ENCODE measurements at regions of chr2 and their contacts with region 1.

Region 1: DNA sequence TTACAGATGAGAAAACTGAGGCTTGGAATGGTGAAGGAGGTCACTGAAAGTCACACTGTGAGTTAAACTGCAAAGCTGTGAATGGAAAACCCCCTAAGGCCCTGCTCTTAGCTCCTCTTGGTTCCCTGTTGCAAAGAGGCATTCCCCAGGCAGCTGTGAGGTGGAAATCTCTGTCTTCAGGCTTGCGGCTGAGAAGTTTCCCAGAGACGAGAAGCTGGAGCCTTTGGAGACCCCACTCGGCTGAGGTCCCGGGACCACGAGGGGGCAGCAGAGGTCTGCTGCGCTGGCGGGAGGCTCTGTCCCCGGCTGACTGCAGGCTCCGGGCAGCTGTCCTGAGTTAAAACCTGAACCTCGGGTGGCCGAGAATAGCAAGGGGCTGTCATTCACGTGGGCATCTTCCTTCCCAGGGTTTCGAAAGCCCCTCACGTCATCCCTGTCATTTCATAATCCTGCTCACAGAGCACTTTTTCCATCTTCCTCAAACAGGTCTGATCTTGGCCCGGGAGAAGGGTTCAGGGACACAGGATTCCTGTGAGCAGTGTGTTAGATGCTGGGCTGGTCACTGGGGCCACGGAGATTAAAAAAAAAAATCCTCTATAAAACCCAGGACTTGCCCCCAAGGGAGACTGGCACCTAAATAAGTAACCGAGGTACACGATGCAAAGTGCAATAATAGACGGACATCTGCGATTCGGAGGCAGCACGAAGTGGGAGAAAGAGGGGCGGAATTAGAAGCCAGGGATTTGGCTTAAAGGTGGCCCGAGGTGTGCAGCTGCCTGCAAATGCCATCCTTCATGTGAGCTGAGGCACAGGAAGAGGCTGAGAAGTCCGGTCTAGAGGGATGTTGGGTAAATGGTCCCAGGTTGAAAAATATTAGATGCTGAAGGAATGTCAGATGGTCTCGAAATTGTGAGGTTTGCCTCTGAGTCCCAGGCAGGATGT is 24.6 kb upstream of the ATOH8 start:
- DNase-seq: peak; percentile 90
- H3K4me3 ChIP-seq: peak overlapping the region in 1 of 2 experiments; percentile 47; a peak in 1 of 4 replicates
- H3K27ac ChIP-seq: no peak overlapping the region
- H3K4me1 ChIP-seq: peaks cover 0 to 11% of the 10 kb centered on the region in 2 experiments; a peak in 1 of 4 replicates
- H3K27me3 ChIP-seq: no peaks in the 10 kb centered on the region
- CTCF ChIP-seq: peak; percentile 97
- EP300 ChIP-seq: no peak
- RAD21 ChIP-seq: peak; percentile 99

Region 2: GRCh38 chr2:85648619-85649018 is 80.5 kb before region 1 on chr2:
- CTCF ChIA-PET with region 1: interaction called, 12 read pairs
- POLR2A ChIA-PET with region 1: no interaction called
- DNase-seq: peak; percentile 49
- H3K4me3 ChIP-seq: no peak overlapping the region
- H3K27ac ChIP-seq: peak overlapping the region in 1 of 2 experiments; percentile 54; a peak in 2 of 4 replicates
- H3K4me1 ChIP-seq: peaks cover 0 to 12% of the 10 kb centered on the region in 2 experiments; a peak in 1 of 4 replicates
- H3K27me3 ChIP-seq: no peaks in the 10 kb centered on the region
- CTCF ChIP-seq: peak; percentile 66
- EP300 ChIP-seq: no peak
- RAD21 ChIP-seq: peak; percentile 36

Region 3: DNA sequence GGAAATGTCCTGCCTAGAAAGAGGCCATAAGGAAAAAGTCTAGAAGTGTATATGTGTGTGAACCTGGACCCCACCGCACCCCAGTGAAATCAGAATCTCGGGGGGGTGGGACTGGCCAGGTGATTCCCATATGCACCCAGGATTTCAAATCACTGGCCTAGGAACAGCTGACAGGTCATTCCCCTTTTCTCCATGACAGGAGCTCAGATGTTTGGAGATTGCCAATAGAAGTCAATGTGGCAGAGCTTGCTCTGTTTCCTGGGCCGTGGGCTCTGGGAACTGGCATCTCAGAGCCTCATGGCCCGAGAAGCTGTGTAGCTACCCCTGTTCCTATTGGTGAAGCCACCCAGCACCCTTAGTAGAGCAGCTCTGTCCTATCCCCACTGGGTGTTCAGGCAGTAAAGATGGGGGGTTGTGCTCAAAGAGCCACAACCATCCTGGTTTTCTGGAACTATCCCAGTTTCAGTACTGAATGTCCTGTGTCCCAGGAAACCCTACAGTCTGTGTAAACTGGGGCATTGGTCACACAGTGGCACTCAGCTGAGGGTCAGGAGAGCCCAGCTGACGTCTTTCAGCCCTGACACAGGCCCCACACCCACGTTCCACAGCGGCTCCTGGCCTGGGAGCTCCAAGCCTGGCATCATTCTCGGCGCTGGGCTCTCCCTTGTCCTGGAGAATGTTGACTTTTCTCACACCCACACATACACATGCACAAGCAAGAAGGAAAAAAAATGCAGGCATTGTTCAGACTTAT is 16.1 kb before region 1 on chr2:
- CTCF ChIA-PET with region 1: interaction called, 60 read pairs
- POLR2A ChIA-PET with region 1: no interaction called
- DNase-seq: no peak
- H3K4me3 ChIP-seq: no peak overlapping the region
- H3K27ac ChIP-seq: no peak overlapping the region
- H3K4me1 ChIP-seq: peaks cover 9 to 16% of the 10 kb centered on the region in 2 experiments; a peak in 3 of 4 replicates
- H3K27me3 ChIP-seq: no peaks in the 10 kb centered on the region
- CTCF ChIP-seq: no peak
- EP300 ChIP-seq: no peak
- RAD21 ChIP-seq: no peak

Region 4: DNA sequence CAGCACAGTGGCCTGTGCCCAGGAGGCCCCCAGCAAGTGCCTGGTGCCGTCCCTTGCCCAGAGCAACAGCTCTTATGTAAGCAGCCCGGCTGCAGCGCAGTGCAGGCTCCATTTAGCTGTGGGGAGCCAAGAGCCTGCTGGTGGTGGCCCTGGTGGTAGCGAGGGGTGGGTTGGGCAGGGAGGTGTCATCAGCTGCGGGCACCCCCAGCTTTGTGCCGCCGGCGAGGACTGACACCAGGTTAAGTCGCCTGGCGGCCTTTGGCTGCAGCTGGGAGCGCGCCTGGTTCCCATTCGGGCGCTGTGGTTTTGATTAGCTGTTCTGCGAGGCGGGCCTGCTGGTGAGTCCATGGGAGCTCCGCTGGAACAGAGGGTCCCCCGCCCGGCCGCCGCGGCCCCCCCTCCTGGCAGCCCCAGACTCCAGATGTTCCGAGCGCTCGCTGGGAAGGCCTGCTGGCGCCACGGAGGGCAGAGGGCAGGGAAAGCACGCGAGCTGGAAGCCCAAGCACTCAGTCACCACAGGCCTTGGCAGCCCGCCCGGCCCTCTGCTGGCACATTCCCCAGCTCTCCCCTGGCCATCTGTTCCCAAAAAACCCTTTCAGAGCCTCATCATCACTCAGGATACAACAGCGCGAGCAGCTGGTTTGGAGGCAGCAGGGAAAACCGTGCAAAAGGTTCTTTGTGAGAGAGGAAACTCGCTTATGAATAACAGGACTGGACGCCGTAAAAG is 43.0 kb after region 1 on chr2:
- CTCF ChIA-PET with region 1: interaction called, 77 read pairs
- POLR2A ChIA-PET with region 1: no interaction called
- DNase-seq: peak; percentile 96
- H3K4me3 ChIP-seq: peak overlapping the region; percentile 28 to 55
- H3K27ac ChIP-seq: peak overlapping the region; percentile 96 to 99
- H3K4me1 ChIP-seq: peaks cover 63 to 70% of the 10 kb centered on the region in 2 experiments
- H3K27me3 ChIP-seq: no peaks in the 10 kb centered on the region
- CTCF ChIP-seq: peak; percentile 46
- EP300 ChIP-seq: peak; percentile 92 to 100
- RAD21 ChIP-seq: peak; percentile 53

Region 5: GRCh38 chr2:85797921-85798320 is 68.8 kb after region 1 on chr2:
- CTCF ChIA-PET with region 1: interaction called, 626 read pairs
- POLR2A ChIA-PET with region 1: no interaction called
- DNase-seq: peak; percentile 72
- H3K4me3 ChIP-seq: no peak overlapping the region
- H3K27ac ChIP-seq: no peak overlapping the region
- H3K4me1 ChIP-seq: peaks cover 23 to 27% of the 10 kb centered on the region in 2 experiments; a peak in 3 of 4 replicates
- H3K27me3 ChIP-seq: no peaks in the 10 kb centered on the region
- CTCF ChIP-seq: peak; percentile 66
- EP300 ChIP-seq: no peak
- RAD21 ChIP-seq: peak; percentile 79

Measured in SK-N-SH (cell line).